Activated naive CD4-positive, alpha-beta T cell treated with anti-CD3 and anti-CD28 coated beads for 36 hours (primary cell): ENCODE measurements at regions of chrX and their contacts with region 1.

Region 1: DNA sequence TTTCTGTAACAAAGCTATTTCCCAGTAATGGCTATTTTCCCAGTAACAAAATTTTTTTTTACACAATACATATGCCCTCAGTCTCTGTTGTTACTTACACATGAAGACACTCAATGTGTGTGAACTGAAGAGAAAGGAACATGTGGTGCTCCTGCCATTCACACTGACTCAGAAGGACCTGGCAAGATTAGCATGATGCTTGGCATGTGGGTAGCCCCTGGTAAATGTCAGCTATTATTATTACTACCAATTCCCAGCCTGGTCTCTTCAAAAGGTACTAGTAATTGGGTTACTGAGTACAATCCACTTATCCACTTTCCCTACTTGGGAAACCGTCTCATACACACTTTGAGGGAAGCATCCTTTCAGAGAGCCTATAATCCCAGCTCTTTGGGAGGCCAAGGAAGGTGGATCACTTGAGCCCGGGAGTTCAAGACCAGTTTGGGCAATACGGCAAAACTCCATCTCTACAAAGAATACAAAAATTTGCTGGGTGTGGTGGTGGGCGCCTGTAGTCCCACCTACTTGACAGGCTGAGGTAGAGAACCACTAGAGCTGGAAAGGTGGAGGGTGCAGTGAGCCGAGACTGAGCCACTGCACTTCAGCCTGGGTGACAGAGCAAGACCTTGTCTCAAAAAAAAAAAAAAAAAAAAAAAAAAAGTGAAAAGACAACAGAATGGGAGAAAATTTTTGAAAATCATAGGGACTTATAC is 14.6 kb downstream of the RBBP7 start:
- DNase-seq: peak; percentile 31
- H3K4me3 Mint-ChIP-seq: peak overlapping the region; percentile 36
- H3K27ac Mint-ChIP-seq: peak overlapping the region; percentile 92
- H3K4me1 Mint-ChIP-seq: peaks cover 63% of the 10 kb centered on the region
- H3K27me3 Mint-ChIP-seq: no peaks in the 10 kb centered on the region

Region 2: DNA sequence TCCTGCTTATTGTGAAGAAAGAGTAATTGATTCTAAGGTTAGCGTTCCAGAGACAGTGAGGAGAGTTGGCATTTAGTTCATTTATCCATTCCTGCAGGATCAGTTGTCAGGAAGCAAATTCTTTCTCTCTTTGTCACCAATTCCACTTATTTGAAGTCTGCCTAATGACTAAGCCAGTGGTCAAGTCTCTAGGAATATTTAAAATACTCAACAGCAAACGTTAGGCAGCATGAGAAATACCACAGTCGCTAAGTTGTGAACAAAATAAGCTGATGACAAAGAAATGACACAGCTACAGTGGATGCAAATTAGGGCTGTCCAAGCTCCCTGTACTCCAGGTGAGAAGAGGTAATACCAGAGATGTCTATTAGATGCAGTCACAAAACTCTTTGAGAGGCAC is 694.8 kb before region 1 on chrX:
- CTCF ChIA-PET with region 1: no interaction called
- intact Hi-C with region 1: no loop called
- DNase-seq: no peak
- H3K4me3 Mint-ChIP-seq: no peak overlapping the region
- H3K27ac Mint-ChIP-seq: no peak overlapping the region
- H3K4me1 Mint-ChIP-seq: peaks cover 1% of the 10 kb centered on the region
- H3K27me3 Mint-ChIP-seq: peaks cover 2% of the 10 kb centered on the region

Region 3: GRCh38 chrX:16836371-16836770 is 19.1 kb before region 1 on chrX:
- CTCF ChIA-PET with region 1: interaction called, 5 read pairs
- intact Hi-C with region 1: loop called (anchors 2 kb)
- DNase-seq: no peak
- H3K4me3 Mint-ChIP-seq: no peak overlapping the region
- H3K27ac Mint-ChIP-seq: peak overlapping the region; percentile 70
- H3K4me1 Mint-ChIP-seq: peaks cover 11% of the 10 kb centered on the region
- H3K27me3 Mint-ChIP-seq: no peaks in the 10 kb centered on the region

Region 4: DNA sequence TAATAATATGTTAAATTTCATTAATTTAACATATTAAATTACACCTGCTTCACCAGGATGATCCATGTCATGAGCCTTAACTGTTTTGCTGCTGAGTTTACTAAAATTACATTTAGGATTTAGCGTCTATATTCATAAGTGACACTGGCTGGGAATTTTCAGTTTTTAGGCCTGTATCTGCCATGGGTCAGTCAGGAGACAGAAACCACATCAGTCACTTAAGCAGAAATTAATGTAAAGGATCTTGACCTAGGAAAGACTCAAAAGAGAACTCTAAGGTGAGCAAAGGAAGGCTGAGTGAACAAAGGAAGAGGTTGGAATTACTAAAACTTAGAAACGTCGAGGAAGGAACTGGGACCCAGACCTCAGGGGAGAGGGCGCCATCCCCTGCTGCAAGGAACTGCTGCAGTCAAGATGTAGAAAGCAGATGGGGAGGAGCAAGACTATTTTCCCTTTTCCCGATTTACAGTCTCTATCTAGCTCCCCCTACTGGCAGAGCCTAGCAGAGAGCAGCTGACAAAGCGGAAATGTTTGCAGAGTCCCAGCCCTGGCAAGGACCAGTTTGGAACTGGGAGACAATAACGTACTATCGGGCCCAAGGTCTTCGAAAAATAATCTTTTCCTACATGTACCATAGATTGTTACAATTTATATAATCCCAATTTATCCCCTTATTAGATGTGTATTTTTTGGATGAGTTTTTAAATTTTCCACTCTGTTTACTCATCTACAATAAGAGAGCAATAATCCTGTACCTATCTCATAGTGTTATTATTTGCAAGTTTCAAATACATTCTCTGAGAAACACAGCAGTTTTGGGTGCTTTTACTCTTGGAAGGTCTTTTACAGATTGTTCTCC is 37.2 kb after region 1 on chrX:
- CTCF ChIA-PET with region 1: no interaction called
- intact Hi-C with region 1: loop called (anchors 1 kb)
- DNase-seq: peak; percentile 76
- H3K4me3 Mint-ChIP-seq: no peak overlapping the region
- H3K27ac Mint-ChIP-seq: peak overlapping the region; percentile 46
- H3K4me1 Mint-ChIP-seq: peaks cover 18% of the 10 kb centered on the region
- H3K27me3 Mint-ChIP-seq: no peaks in the 10 kb centered on the region

Region 5: GRCh38 chrX:17266127-17266526 is 410.6 kb after region 1 on chrX:
- CTCF ChIA-PET with region 1: no interaction called
- intact Hi-C with region 1: no loop called
- DNase-seq: no peak
- H3K4me3 Mint-ChIP-seq: no peak overlapping the region
- H3K27ac Mint-ChIP-seq: no peak overlapping the region
- H3K4me1 Mint-ChIP-seq: no peaks in the 10 kb centered on the region
- H3K27me3 Mint-ChIP-seq: peaks cover 2% of the 10 kb centered on the region